ENCODE measurements at regions of chr4 and their contacts with region 1.

Region 1: DNA sequence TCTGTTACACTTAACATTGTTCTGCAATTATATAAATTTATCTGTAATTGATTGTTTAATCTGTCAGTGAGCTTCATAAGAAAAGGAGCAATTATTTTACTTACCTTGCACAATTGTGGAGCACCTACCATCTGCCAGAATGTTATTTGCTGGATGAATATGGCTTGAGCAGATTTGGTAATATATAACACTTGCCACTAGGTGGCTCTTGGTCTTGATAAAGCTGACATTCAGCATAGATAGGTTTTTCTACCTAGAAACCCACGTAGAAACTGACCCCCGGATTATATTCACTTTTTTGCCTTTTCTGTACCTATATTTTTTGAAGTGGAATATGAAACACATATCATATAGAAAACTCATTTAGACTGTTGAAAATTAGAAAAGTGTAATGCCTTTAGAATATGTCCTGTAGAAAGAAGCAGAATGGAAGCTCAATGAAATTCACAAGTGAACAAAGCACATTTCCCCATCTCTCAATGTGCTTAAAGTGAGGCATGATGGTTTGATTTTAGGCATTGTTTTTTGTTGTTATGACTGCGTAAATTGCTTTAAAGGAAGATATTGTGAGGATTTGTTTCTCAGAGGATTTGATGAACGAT is 9.5 kb downstream of the RBPJ start:
- DNase-seq: peak; percentile 44
- H3K4me3 ChIP-seq: no peak overlapping the region
- H3K27ac ChIP-seq: no peak overlapping the region
- H3K4me1 ChIP-seq: no peaks in the 10 kb centered on the region
- H3K27me3 ChIP-seq: no peaks in the 10 kb centered on the region
- CTCF ChIP-seq: peak in 3 of 4 experiments; percentile 72 to 76 (median 73)
- POLR2A ChIP-seq: no peak

Region 2: DNA sequence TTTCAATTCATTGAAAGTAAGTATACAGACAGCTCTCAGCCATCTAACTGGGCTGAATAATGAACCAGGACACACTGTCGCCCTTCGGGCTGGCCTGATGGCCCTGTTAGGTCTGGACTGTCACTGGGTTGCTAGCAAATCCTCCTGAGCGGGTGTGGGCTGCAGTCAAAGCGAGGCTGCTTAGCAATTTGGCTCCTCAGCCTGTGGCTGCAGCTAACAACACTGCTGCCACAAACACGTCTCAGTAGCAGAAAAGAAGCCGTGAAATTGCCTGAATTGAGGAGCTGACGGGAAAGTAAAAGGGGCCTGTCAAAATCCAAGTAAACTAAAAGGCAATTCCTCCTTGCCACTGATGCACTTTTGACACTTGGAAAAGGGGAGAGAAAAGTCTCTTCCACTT is 343.5 kb before region 1 on chr4:
- intact Hi-C with region 1: loop called (anchors 5 kb)
- DNase-seq: no peak
- H3K4me3 ChIP-seq: no peak overlapping the region
- H3K27ac ChIP-seq: no peak overlapping the region
- H3K4me1 ChIP-seq: no peaks in the 10 kb centered on the region
- H3K27me3 ChIP-seq: no peaks in the 10 kb centered on the region
- CTCF ChIP-seq: no peak
- POLR2A ChIP-seq: no peak